ENCODE measurements at regions of chr11 and their contacts with region 1.

Region 1: DNA sequence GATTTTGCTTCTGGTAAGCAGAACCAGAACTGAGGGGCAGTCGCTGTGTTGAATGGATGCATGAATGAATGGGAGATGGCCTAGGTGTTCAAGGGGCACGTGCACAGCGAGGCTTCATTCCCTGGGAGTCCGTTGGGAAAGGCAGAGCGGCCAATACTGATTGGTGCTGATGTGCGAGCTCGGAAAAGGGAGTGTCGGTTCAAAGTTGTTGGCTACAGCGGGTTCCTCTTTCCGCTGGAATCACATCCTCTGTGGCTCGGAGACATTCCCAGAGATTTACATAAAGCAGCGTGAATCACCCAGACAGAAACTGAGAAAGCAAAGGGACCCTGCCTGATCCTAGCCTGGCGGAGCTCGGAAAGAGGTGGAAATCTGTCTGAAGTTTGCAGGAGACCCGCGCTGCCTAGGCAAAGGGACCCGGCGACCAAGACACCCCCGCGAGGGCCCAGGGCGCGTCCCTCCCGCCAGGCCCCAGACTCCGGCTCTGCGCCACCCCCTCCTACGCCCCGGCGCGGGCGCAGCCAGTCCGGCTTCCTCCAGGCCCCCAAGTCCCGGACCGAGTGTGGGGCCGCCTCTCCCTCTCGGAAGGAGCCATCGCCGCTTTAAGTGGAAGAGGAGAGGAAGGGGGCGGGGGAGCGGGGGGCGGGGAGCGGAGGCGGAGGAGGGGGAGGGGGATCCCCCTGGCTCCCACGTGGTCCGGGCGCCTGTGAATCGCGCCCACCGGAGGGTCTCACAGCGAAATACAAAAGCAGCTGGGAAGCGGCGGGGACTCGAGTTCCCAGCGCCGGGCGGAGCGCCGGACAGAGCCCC is at the start of gene FJX1:
- DNase-seq: no peak
- ATAC-seq: peak; percentile 76
- H3K4me3 ChIP-seq: peak within 1 kb of the TSS; percentile 68 to 75
- H3K27ac ChIP-seq: peak within 1 kb of the TSS; percentile 85
- H3K4me1 ChIP-seq: peaks cover 44% of the 10 kb centered on the region
- H3K27me3 ChIP-seq: no peaks in the 10 kb centered on the region; the same call in 1 of the 2 replicates
- CTCF ChIP-seq: no peak
- total RNA-seq, gene FJX1: 31.1 TPM

Region 2: GRCh38 chr11:35747668-35748067 is 129.8 kb after region 1 on chr11:
- CTCF ChIA-PET with region 1: no interaction called
- POLR2A ChIA-PET with region 1: interaction called, 22 read pairs
- in situ Hi-C with region 1: no loop called
- intact Hi-C with region 1: no loop called
- DNase-seq: no peak
- ATAC-seq: no peak
- H3K4me3 ChIP-seq: no peak overlapping the region
- H3K27ac ChIP-seq: no peak overlapping the region
- H3K4me1 ChIP-seq: no peaks in the 10 kb centered on the region
- H3K27me3 ChIP-seq: no peaks in the 10 kb centered on the region
- CTCF ChIP-seq: no peak

Region 3: DNA sequence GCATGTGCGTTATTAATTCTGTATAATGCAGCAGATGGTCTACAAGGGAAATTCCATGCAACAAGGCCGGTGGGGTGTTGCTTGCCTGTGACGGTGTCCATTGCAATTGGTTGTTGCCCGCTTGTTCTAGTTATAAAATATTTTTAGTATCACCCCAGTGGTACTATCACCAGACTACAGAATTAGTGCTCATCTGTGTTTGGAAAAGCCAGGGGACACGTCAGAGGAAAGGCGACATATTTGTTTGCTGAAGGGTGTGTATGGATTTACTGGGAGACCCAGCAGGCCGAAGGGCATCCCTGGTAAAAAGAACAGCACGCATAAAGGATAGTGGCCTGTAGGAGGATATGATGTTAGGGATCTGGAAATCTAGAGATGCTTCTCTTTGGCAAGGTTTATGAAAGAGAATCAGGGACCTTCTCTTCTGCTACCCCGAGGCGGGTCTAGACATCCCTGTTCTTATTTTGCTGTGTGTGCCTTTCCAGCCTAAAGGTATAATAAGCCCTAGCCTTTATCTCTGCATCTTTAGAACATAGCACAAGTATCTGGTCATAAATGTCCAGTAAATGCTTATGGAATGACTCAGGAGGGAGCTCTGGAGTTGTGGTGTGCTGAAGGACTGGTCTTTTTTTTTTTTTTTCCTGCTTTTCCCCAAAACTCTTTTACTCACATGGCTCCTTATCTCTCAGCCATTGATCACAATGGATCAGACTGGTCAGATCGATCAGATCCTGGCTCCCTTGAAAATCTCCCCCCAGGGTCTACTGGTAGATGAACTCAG is 416.8 kb after region 1 on chr11:
- CTCF ChIA-PET with region 1: no interaction called
- POLR2A ChIA-PET with region 1: no interaction called
- in situ Hi-C with region 1: no loop called
- intact Hi-C with region 1: loop called (anchors 10 kb)
- DNase-seq: no peak
- ATAC-seq: peak; percentile 88
- H3K4me3 ChIP-seq: no peak overlapping the region
- H3K27ac ChIP-seq: peak overlapping the region; percentile 82
- H3K4me1 ChIP-seq: peaks cover 49% of the 10 kb centered on the region
- H3K27me3 ChIP-seq: no peaks in the 10 kb centered on the region
- CTCF ChIP-seq: 0 out of 2 replicates have a peak, but pooled peaks have one; percentile 6

Region 4: DNA sequence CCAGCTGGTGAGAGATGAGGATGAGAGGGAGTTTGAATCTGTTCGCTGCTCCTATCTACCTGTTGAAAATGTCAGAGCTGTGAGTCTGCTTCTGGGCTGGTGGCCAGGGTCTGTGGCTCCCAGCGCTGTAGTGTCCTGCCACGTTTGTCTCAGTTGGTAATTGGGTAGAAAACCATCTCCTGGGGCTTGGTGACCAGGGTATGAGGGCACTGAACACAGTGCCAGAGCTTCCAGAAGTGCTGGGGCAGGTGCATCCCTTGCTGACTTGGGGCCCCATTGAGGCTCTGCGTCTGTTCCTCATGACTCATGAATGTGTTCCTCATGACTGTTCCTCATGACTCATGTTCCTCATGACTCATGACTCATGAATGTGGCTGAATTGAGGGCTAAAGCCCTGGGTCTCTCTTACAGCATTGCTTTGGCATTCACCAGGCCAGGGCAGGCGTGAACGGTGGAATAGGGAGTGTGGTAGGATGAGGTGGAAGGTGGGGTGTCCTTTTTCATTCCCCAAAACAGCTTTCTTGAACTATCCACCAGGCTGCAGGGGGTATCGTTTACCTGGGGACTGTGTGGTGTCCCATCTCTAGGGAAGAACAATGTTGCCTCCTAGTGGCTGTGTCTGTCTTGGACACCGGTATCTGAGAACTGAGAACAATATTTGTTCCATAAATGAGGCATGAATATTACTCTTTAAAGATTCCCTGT is 531.8 kb after region 1 on chr11:
- CTCF ChIA-PET with region 1: no interaction called
- POLR2A ChIA-PET with region 1: no interaction called
- in situ Hi-C with region 1: no loop called
- intact Hi-C with region 1: loop called (anchors 5 kb)
- DNase-seq: peak; percentile 97
- ATAC-seq: peak; percentile 98
- H3K4me3 ChIP-seq: no peak overlapping the region
- H3K27ac ChIP-seq: peak overlapping the region; percentile 80
- H3K4me1 ChIP-seq: peaks cover 23% of the 10 kb centered on the region
- H3K27me3 ChIP-seq: no peaks in the 10 kb centered on the region
- CTCF ChIP-seq: peak; percentile 82

Region 5: GRCh38 chr11:36265793-36266628 is 648.1 kb after region 1 on chr11:
- CTCF ChIA-PET with region 1: no interaction called
- POLR2A ChIA-PET with region 1: no interaction called
- in situ Hi-C with region 1: no loop called
- intact Hi-C with region 1: loop called (anchors 1 kb)
- DNase-seq: no peak
- ATAC-seq: peak; percentile 87
- H3K4me3 ChIP-seq: no peak overlapping the region
- H3K27ac ChIP-seq: no peak overlapping the region
- H3K4me1 ChIP-seq: no peaks in the 10 kb centered on the region
- H3K27me3 ChIP-seq: no peaks in the 10 kb centered on the region
- CTCF ChIP-seq: peak; percentile 90